Psoas muscle (tissue), 8 donors: ENCODE measurements at regions of chr2 and their contacts with region 1.

Region 1: DNA sequence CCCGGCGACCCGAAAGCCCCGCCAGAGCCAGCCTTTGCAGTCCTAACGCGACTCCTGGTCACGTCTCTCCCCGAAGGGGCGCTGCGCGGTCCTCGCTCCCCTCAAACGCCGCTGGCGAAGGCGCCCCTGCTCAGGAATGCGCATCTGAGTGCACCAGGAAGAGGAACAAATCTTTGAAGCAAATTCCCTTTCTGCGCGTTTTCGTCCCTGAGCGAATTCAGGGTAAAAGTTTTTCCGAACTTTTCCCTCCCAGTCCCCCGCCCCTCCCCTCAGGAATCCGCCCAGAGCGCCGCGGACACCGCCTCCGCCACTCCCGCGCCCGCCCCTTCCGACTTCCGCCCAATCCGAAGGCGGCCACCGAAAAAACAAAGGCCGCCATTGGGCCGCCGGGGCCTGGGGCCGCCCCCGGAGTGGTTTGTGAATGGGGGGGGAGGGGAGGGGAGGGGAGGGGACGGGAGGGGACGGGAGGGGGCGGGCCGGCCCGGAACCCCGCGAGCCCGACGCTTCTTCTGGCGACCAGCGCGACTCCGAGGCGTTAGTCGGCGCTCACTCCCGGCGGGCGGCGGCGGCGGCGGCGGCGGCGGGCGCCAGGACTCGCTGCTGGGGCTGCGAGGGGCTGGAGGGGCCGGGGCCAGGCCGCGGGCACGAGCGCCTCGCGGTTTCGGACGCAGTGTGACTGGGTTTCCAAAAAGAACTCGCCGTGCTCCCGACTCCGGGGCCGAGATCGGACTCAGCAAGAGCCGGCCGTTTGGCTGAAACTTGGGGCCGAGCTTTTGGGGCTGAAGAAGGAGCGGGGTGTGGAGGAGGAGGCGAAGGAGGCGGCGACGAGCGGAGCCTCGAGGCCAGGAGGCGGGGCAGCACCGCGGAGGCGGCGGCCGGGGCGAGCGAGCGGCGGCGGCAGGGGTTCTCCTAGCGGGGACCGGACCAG is at the start of gene FZD7:
- DNase-seq: peak; percentile 95 to 97
- ATAC-seq: peak; percentile 84 to 88 (median 86)
- H3K4me3 ChIP-seq: peak within 1 kb of the TSS; percentile 87
- H3K27ac ChIP-seq: peak within 1 kb of the TSS; percentile 96
- H3K4me1 ChIP-seq: peaks cover 24% of the 10 kb centered on the region
- H3K27me3 ChIP-seq: no peaks in the 10 kb centered on the region
- CTCF ChIP-seq: no peak
- total RNA-seq, gene FZD7: 4.1 to 32.1 (median 9.9) TPM

Region 2: GRCh38 chr2:201795607-201796477 is 237.7 kb before region 1 on chr2:
- intact Hi-C with region 1: loop called (anchors 5 kb)
- DNase-seq: no peak
- ATAC-seq: peak; percentile 66 to 80 (median 70)
- H3K4me3 ChIP-seq: no peak overlapping the region
- H3K27ac ChIP-seq: no peak overlapping the region
- H3K4me1 ChIP-seq: no peaks in the 10 kb centered on the region
- H3K27me3 ChIP-seq: no peaks in the 10 kb centered on the region
- CTCF ChIP-seq: peak; percentile 65

Region 3: GRCh38 chr2:201882353-201883090 is 151.1 kb before region 1 on chr2:
- intact Hi-C with region 1: loop called (anchors 5 to 10 kb)
- DNase-seq: peak in 1 of 2 donors; percentile 19
- ATAC-seq: peak in 1 of 4 donors; percentile 20
- H3K4me3 ChIP-seq: no peak overlapping the region
- H3K27ac ChIP-seq: peak overlapping the region; percentile 92
- H3K4me1 ChIP-seq: peaks cover 39% of the 10 kb centered on the region
- H3K27me3 ChIP-seq: peaks cover 0 to 2% (median 0%) of the 10 kb centered on the region in 3 donors
- CTCF ChIP-seq: no peak

Region 4: DNA sequence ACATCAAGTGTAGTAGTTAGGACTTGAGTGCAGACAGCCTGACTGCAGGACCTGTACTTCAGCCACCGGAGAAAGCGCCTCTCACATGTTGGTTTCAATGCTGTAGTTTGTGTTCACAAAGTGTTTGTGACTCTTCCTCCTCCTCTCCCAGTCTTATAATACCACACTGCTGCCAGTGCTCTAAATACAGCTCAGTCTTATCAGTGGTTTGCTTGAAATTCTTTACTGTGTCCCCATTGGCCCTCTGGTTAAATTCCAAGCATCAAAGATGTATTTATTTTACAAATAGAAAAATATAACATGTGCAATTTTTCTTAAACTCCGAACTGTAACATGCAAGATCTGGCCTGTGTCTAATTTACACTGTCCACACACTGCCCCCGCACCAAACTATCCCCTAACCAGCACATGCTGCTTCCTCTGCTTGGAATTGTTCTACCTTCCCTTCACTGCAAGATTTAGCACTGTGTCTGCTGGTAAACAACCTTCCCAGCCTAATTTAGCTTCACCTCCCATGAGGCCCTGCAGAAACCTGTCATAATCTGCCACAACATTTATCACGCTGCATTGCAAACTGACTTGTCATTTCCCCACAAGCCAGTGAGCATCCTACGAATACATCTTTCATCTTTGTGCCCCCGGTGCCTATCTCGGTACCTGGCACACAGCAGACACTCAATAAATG is 127.7 kb after region 1 on chr2:
- intact Hi-C with region 1: loop called in 1 of 2 experiments (anchors 5 kb)
- DNase-seq: no peak
- ATAC-seq: peak; percentile 63 to 85 (median 76)
- H3K4me3 ChIP-seq: no peak overlapping the region
- H3K27ac ChIP-seq: peak overlapping the region; percentile 72
- H3K4me1 ChIP-seq: peaks cover 7% of the 10 kb centered on the region
- H3K27me3 ChIP-seq: no peaks in the 10 kb centered on the region
- CTCF ChIP-seq: no peak

Region 5: DNA sequence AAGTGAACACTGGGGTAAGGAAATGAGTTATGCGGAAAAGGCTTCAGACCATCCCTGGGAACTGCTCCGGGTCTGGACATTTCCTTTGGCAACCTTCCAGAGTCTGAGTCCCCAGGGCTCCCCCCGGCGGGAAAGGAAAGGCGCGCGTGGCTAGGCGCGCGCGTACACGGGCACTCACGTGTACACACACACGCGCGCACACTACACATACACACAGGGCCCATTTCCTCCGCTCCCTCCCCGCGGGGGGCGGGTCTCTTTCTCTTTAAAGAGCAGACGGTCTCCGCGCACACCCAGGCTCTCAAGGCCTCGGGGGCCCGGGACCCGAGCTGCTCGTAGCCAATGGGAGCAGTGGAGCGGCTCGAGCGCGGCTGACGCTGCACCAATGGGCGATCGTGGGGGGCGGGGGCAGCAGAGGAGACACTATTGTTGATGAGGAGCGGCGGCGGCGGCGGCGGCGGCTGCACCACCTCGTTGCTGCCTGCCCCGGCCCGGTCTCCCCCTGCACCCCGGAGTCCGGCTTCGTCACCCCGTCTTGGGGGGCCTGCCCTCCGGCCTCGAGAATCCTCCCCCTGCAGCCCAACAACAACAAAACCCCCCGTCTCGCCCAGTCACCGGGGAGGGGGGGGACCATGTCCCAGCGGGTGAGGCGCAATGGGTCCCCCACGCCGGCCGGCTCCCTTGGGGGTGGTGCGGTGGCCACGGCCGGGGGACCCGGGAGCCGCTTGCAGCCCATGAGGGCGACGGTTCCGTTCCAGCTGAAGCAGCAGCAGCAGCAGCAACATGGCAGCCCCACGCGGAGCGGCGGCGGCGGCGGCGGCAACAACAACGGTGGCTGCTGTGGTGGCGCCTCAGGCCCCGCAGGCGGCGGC is 601.2 kb after region 1 on chr2 and contains the start of gene FAM117B:
- intact Hi-C with region 1: loop called in 1 of 2 experiments (anchors 5 kb)
- DNase-seq: peak; percentile 99
- ATAC-seq: peak; percentile 98 to 99 (median 98)
- H3K4me3 ChIP-seq: peak within 1 kb of the TSS; percentile 91
- H3K27ac ChIP-seq: peak within 1 kb of the TSS; percentile 87
- H3K4me1 ChIP-seq: no peaks in the 10 kb centered on the region
- H3K27me3 ChIP-seq: no peaks in the 10 kb centered on the region
- CTCF ChIP-seq: no peak
- total RNA-seq, gene FAM117B: 0.75 to 2.4 (median 0.90) TPM